GM10248 (cell line): ENCODE measurements at regions of chr1 and their contacts with region 1.

Region 1: DNA sequence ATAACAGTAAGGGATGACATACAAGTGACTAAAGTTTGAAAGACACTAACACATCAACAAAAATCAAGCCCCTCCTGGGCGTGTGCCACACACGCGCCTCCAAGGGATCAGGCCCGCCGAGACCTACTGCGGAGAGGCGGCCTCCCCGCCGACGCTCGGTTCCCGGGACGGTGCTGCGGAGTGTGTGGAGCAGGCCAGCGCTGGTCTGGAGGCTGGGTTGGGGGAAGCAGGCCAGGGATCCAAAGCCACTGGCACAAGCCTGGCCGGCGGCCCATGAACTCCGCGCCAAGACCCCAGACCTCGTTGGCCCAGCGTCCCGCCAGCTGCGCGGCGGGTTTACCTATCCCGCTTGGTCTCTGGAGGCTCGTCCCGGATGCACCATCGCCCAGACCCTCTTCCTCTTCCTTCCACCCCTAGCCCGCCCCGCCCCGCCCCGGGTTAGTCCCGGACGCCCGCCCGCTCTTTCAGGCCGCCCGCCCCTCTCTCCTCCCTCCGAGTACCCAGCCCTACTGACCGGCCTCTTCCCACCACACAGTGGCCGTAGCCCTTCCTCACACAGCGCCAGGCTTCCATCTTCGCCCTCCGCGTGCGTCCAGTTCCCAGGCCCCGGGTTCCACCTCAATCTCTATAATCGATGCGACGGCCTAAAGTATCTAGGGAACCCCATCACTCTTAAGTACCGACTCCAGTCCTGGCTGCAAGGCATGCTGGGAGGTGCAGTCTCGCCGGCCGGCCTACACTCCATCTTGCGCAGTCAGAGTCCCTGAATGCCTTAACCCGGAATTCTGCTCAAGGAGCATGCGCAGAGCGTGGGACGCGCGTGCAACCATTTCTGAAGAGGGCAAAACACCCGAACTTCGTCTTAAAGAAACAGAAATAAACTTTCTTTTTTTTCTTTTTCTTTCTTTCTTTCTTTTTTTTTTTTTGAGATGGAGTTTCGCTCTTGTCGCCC is at the start of gene ANGEL2:
- DNase-seq: peak; percentile 94
- CTCF ChIP-seq: no peak

Region 2: DNA sequence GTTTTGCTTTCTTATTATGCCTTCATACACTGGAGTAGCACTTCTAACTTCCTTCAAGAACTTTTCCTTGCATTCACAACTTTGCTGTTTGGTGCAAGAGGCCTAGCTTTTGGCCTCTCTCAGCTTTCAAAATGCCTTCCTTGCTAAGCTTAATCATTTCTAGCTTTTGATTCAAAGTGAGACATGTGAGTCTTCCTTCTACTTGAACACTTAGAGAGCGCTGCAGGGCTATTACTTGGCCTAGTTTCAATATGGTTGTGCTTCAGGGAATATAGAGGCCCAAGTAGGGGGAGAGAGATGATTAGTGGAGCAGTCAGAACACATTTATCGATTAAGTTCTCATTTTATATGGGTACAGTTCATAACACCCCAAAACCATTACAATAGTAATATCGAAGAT is 12.1 kb before region 1 on chr1:
- CTCF ChIA-PET with region 1: interaction called, 11 read pairs
- POLR2A ChIA-PET with region 1: no interaction called
- DNase-seq: no peak
- CTCF ChIP-seq: no peak

Region 3: GRCh38 chr1:213075725-213076124 is 60.4 kb after region 1 on chr1:
- CTCF ChIA-PET with region 1: no interaction called
- POLR2A ChIA-PET with region 1: no interaction called
- DNase-seq: peak; percentile 29
- CTCF ChIP-seq: no peak